ENCODE measurements at regions of chr5 and their contacts with region 1.

Region 1: DNA sequence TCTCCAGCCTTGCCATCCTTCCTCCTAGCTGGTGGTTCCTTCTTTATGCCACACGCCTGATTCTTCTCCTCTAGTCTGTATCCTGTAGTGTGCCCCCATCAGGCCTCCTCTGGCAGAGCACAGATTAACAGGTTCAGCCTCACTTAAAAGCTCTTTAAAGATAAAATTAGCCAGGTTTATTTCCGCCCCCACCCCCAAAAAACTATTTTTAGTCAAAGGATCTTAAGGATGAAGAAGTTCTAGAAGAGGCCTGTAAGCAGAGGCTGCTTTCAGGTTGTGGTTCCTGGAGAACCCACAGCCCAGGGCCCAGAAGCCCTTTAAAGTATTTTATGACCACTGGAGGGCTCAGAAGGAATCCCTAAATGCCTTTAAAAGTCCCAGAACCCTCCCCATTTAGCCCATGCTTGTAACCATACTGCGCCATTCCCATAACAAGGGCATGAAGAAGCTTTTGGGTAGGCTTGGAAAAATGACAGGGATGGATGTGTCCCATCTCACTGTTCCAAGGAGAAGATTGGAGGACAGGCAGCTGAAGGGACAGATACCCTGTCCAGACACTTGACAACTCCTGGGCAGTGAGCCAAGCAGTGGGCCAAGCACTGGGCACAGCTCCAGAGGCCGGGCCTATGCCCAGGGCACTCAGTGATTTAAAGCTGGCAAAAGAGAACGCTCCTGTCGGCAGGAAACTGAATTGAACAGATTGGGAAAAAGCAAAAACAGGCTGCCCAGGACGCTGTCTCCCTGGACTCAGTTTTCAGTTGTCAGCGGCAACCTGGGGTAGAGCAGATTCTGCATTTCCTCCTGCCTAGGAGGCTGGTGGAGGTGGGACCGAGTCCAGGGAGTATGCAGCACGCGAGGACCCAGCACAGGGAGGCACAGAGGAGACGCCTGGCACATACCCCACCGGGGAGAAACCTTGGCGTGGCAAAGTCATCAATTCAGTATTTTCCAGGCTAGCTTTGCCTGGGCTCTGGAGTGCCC is 106.3 kb upstream of the SSBP2 start:
- DNase-seq: peak; percentile 42
- ATAC-seq: peak; percentile 64
- H3K4me3 Mint-ChIP-seq: no peak overlapping the region
- H3K27ac Mint-ChIP-seq: peak overlapping the region; percentile 17; the same call in 1 of the 2 replicates
- H3K4me1 Mint-ChIP-seq: peaks cover 52% of the 10 kb centered on the region
- H3K27me3 Mint-ChIP-seq: no peaks in the 10 kb centered on the region; the same call in 1 of the 2 replicates
- CTCF ChIP-seq: peak; percentile 30

Region 2: DNA sequence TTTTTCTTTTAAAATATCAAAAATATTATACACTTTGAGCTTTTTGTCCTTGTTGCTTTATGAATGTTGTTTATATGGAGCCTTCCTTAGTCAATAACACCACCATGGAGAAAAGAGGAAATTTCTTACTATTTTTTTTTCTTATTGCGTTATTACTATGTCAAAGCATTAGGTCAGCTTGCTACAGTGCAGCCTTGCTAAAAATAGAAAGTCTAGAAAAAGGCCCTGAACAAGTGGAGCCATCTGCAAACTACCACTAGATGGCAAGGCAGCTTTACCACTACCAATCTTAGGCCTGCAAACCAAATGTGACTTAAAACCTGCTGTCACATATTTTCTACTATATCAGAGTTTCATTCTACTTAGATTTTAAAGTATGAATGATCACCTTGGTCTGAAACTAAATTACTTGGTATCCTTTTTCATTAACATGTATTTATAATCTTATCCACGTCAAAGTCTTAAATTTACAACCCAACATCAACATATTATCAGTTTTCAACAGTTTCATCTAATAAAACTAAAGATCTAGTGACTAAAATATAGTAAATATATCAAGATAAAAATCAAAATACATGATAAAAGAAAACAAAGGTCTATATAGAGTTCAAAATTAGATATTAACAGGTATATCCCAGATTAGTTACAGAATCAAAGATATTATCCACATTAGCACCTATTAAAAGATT is 350.2 kb before region 1 on chr5:
- CTCF ChIA-PET with region 1: interaction called, 10 read pairs
- POLR2A ChIA-PET with region 1: no interaction called
- DNase-seq: peak; percentile 14
- ATAC-seq: peak; percentile 94
- H3K4me3 Mint-ChIP-seq: no peak overlapping the region
- H3K27ac Mint-ChIP-seq: no peak overlapping the region
- H3K4me1 Mint-ChIP-seq: no peaks in the 10 kb centered on the region; the same call in 1 of the 2 replicates
- H3K27me3 Mint-ChIP-seq: no peaks in the 10 kb centered on the region
- CTCF ChIP-seq: peak; percentile 58

Region 3: DNA sequence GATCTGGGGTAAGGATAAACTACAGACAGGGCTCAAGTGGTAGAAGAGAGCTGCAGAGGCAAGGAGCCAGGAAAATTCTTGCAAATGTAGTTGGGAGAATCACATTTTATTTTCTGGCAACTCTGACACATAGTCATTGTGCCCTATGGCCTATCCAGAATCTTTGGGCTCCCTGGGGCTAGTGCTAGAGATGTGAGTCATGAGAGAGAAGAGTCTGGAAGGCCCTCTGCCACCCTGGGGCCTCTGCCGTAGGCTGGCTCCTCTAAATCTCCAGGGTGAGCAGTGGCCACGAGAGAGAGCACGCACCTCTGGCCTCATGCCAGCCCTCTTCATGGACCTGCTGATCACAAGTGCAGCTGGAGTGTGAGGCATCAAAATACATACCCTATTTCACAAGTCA is 32.0 kb before region 1 on chr5:
- CTCF ChIA-PET with region 1: no interaction called
- POLR2A ChIA-PET with region 1: no interaction called
- DNase-seq: no peak
- ATAC-seq: no peak
- H3K4me3 Mint-ChIP-seq: no peak overlapping the region
- H3K27ac Mint-ChIP-seq: no peak overlapping the region
- H3K4me1 Mint-ChIP-seq: peaks cover 2% of the 10 kb centered on the region
- H3K27me3 Mint-ChIP-seq: peaks cover 2% of the 10 kb centered on the region; the same call in 1 of the 2 replicates
- CTCF ChIP-seq: no peak

Region 4: GRCh38 chr5:81878333-81878732 is 21.1 kb after region 1 on chr5:
- CTCF ChIA-PET with region 1: interaction called, 11 read pairs
- POLR2A ChIA-PET with region 1: interaction called, 3 read pairs
- DNase-seq: no peak
- ATAC-seq: no peak
- H3K4me3 Mint-ChIP-seq: no peak overlapping the region
- H3K27ac Mint-ChIP-seq: no peak overlapping the region
- H3K4me1 Mint-ChIP-seq: peaks cover 3% of the 10 kb centered on the region; the same call in 1 of the 2 replicates
- H3K27me3 Mint-ChIP-seq: no peaks in the 10 kb centered on the region; the same call in 1 of the 2 replicates
- CTCF ChIP-seq: no peak